ENCODE measurements at regions of chr9 and their contacts with region 1.

Region 1: DNA sequence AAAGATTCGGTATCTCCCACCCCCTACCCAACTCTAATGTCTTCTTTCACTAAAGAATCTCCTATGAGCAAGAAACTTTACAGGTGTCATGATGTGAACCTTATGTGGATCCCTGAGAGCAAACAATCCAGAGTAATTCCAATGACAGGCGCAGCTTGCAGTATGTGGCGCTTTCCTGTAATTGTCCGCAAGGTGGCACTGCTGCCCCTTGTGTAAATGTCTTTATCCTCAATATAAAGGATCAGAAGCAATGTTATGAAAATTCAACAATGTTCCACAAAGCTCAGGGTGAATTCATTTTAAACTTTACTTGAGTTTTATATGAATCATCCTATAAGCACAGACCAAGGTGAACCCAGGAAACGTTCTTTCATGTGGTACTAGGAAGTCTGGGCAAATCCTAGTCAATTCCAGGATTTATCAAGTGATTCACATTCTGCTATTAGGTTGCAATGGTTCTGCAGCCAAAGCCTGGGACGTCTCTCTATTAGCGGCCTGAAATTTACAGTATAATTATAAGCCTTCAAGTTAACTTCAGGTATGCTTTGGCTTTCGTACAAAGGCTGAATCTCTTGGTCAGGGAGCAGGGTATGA is 113.7 kb downstream of the TRPM6 start:
- DNase-seq: peak; percentile 90

Region 2: DNA sequence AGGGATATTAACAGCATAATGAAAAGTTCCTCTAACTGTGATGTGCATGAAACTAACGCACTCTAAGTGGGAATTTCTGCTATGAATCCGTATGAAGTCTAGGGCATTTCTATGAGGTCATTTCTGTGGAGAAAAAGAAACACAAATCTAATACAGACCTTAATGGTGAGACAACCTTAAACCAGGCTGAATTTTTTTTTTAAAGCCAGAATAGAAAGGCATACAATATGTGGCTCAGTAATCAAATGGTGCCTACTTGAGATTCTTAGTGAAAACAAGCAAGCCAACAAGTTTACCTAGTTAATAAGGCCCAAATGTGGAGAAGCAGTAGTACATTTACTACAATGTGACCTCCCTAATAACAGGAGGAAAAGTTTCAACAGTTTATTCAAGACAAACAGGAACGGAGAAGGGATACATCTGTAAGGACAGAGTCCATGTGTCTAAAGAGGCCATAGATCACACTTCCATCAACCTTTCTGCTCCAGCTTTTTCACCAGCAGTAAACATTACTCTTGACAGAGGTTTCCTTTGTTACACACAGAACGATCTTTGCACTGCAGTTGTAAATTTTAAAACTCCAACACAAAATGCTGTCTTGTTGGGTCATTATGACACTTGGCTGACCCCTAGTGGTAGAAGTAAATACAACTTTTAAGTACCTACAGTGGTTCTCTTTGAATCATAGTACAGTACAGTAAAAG is 227.9 kb after region 1 on chr9:
- intact Hi-C with region 1: loop called in 1 of 2 experiments (anchors 5 kb)
- DNase-seq: no peak

Region 3: DNA sequence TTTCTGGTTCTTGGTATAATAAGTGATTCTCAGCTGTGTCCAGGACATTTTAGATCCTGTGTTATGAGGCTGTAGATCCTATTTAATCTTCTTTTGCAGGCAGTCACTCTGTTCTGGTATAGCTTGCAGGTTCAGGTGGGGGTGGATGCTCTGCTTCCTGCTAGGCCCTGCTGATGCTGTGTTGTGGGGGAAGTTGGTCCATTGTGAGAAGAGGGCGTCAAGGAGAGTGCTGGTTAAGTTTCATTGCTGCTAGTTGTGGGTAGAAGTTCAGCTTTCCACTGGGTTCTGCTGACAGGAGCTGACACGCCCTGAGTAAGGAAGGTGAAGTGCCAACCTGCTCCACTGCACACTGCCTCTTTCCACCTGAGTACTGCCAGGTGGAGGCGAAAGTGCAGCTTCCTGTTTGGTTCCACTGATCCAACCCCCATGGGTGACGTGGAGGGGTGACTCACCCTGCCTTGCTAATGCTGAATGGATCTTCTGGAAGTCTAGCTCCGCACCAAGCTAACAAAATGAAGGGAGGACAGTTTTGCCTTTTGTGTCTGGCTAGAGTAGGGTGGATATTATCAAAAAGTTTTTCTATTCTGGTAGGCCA is 297.6 kb after region 1 on chr9:
- intact Hi-C with region 1: loop called in 1 of 2 experiments (anchors 5 kb)
- DNase-seq: no peak

Region 4: GRCh38 chr9:75088260-75088905 is 314.4 kb after region 1 on chr9 and contains the start of gene OSTF1:
- intact Hi-C with region 1: loop called in 1 of 2 experiments (anchors 10 kb)
- DNase-seq: peak; percentile 99
- total RNA-seq, gene OSTF1: 36.5 to 40.2 TPM

Measured in posterior vena cava (tissue), 2 donors.